GM10248 (cell line): ENCODE measurements at regions of chr17 and their contacts with region 1.

Region 1: GRCh38 chr17:17681187-17681848 is at the start of gene RAI1:
- DNase-seq: peak; percentile 86
- CTCF ChIP-seq: peak; percentile 92

Region 2: DNA sequence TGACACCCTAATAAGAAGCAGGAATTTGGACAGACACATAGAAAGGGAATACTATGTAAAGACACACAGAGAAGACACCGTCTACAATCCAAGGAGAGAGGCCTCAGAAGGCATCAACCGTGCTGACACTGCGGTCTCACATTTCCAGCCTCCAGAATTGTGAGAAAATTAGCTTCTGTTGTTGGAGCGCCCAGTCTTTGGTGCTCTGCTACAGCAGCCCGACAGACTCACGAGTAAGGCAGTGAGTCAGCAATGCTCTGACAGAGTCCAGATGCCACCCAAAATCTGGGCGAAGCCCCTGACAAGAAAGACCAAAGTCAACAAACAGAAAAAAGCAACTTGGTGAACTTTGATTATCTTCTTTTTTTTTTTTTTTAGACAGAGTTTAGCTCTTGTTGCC is 32.6 kb before region 1 on chr17:
- CTCF ChIA-PET with region 1: no interaction called
- POLR2A ChIA-PET with region 1: no interaction called
- DNase-seq: no peak
- CTCF ChIP-seq: no peak

Region 3: DNA sequence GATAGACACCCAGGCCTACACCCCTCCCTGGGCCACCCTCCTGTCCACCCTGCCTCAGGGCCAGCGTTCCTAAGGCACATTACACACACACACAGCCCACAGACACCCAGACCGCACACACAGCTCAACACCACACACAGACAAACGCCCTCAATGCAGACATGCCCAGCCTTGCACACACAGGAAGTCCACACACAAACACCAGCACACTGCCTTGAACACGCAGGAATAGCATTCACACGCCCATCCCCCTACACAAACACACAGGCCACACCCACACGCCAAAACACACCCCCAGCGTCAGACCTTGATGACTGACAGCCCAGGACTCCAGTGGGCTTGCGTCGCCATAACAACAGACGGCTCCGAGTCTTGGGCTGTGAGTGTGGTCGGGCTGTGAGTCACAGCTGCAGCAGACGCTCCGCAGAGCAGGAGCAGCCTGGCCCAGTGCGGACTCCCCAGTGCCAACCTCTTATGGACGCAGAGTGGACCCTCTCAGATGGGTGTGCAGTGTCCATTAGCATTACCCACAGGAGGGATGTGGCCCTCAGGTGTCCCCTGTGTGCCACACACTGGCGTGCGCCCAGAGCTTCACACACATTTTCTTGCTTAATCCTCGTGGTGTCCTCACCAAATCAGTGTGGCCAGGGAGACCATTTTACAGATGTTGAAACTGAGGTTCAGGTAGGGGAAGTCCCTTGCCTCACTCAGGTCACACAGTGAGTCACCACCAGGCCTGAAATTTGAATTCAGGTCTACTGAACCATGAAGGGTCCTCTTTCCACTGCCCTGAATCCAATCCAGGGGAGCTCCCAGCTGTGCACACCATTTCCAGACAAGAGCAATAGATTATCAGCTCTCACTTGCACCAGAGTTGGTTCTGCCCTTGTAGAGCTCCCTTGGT is 17.9 kb before region 1 on chr17:
- CTCF ChIA-PET with region 1: interaction called, 57 read pairs
- POLR2A ChIA-PET with region 1: interaction called, 3 read pairs
- DNase-seq: peak; percentile 91
- CTCF ChIP-seq: no peak

Region 4: GRCh38 chr17:17693253-17694168 is 12.2 kb after region 1 on chr17:
- CTCF ChIA-PET with region 1: interaction called, 14 read pairs
- POLR2A ChIA-PET with region 1: interaction called, 3 read pairs
- DNase-seq: no peak
- CTCF ChIP-seq: no peak

Region 5: DNA sequence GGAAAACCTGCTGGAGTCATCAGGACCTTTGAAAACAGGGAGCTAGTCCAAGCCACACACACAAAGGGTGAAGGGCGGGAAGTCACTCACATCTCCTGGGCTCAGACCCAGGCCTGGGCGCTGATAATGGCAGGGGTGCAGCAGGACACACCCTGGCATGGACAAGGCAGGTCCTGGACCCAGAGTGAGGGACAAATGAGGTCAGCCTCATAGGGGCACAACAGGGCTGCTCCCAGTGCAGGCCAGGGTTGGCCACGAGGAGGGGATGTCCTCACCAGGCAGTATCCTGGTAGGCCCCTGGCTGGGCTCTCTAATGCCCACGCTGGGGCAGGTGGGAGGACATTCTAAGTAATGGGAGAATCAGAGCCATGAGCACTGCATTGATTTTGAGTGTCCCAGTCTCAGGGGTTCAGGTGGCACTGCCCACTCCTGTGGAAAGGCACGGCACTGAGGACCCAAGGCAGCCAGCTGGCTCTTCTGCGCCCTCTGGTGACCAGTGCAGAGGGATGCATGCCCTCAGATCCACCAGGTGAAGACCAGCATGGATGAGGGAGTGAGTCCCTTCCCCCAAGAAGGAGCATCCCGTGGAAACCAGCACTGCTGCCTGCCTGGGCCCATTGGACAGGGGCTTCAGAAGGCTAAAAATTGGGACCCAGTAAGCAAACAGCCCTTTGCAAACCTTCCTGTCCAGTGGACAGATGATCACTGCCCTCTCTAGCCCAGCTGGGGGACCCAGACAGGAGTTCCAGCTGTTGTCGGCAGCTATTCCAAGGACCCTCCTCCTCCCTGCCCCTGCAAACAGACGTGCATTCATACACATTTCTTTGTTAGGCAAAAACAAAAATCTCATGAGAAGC is 178.8 kb after region 1 on chr17:
- CTCF ChIA-PET with region 1: interaction called, 34 read pairs
- POLR2A ChIA-PET with region 1: no interaction called
- DNase-seq: peak; percentile 86
- CTCF ChIP-seq: peak; percentile 94

Region 6: DNA sequence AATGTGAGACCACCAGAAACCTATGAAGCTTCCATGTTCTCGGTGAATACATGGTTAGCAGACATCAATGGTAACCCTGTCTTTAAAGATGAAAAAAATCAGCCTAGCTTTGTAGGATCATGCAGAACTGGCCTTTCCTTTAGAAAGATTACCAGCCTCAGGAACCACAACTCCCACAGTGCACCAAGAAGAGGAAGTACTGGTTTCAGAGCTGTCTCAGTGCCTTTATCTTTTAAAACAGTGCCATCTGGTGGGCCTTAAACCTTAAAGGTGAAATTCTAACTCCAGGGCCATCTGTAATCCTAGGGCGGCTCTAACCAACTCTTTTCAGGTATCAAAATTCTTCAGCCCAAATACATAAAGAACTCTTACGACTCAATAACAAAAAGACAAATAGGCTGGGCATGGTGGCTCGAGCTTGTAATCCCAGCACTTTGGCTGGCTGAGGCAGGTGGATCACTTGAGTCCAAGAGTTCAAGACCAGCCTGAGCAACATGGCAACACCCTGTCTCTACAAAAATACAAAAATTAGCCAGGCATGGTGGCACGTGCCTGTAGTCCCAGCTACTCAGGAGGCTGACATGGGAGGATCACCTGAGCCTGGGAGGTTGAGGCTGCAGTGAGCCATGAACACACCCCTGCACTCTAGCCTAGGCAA is 352.3 kb after region 1 on chr17:
- CTCF ChIA-PET with region 1: interaction called, 12 read pairs
- POLR2A ChIA-PET with region 1: no interaction called
- DNase-seq: peak; percentile 80
- CTCF ChIP-seq: peak; percentile 63